GM12878 (cell line): ENCODE measurements at regions of chr6 and their contacts with region 1.

Region 1: DNA sequence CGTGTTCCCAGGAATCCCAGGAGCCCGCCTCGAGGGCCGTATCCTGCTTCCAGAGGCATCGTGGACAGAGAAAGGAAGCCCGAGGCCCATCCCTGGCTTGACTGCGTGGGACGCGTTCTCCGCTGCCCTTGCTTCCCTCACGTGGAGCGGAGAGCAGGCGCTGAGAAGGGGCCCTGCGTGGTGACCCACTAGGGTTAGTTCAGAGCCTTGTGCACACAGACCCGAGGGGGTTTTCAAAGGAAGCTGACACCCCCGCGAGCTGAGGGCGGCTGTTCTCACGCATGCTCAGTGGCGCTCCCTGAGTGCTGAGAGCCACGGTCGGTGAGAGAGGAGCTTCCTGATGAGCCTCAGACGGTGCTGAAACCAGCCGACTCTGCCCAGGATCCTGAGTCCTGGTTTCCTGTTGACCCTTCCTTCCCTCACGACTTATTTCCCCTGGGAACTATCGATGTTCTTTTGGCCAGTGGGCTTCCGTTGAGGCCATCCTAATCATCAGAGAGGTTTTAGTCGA is 28.9 kb upstream of the CCR6 start:
- DNase-seq: peak; percentile 90
- ATAC-seq: peak; percentile 66
- H3K4me3 ChIP-seq: peak overlapping the region; percentile 70
- H3K27ac ChIP-seq: peak overlapping the region; percentile 99
- H3K4me1 ChIP-seq: peaks cover 74% of the 10 kb centered on the region
- H3K27me3 ChIP-seq: no peaks in the 10 kb centered on the region
- CTCF ChIP-seq: no peak
- EP300 ChIP-seq: peak; percentile 39 to 66; a peak in 2 of 4 replicates
- POLR2A ChIP-seq: peak; percentile 88
- RAD21 ChIP-seq: no peak

Region 2: GRCh38 chr6:166333172-166333995 is 760.6 kb before region 1 on chr6:
- CTCF ChIA-PET with region 1: no interaction called
- POLR2A ChIA-PET with region 1: interaction called, 3 read pairs
- RAD21 ChIA-PET with region 1: no interaction called
- SMC1A ChIA-PET with region 1: no interaction called
- in situ Hi-C with region 1: no loop called
- intact Hi-C with region 1: loop called (anchors 10 kb)
- DNase-seq: peak; percentile 73
- ATAC-seq: peak; percentile 64
- H3K4me3 ChIP-seq: peak overlapping the region; percentile 34; the same call in 1 of the 2 replicates
- H3K27ac ChIP-seq: peak overlapping the region; percentile 93
- H3K4me1 ChIP-seq: peaks cover 43% of the 10 kb centered on the region
- H3K27me3 ChIP-seq: no peaks in the 10 kb centered on the region
- CTCF ChIP-seq: no peak
- EP300 ChIP-seq: peak; percentile 31 to 51; a peak in 2 of 4 replicates
- POLR2A ChIP-seq: peak; percentile 40; the same call in 1 of the 2 replicates
- RAD21 ChIP-seq: no peak

Region 3: GRCh38 chr6:166950443-166950821 is 143.5 kb before region 1 on chr6:
- CTCF ChIA-PET with region 1: no interaction called
- POLR2A ChIA-PET with region 1: interaction called, 9 read pairs
- RAD21 ChIA-PET with region 1: interaction called, 24 read pairs
- SMC1A ChIA-PET with region 1: interaction called, 10 read pairs
- in situ Hi-C with region 1: no loop called
- intact Hi-C with region 1: loop called (anchors 2 kb)
- DNase-seq: no peak
- ATAC-seq: peak; percentile 68
- H3K4me3 ChIP-seq: peak overlapping the region; percentile 71
- H3K27ac ChIP-seq: peak overlapping the region; percentile 96
- H3K4me1 ChIP-seq: peaks cover 42% of the 10 kb centered on the region
- H3K27me3 ChIP-seq: no peaks in the 10 kb centered on the region
- CTCF ChIP-seq: no peak
- EP300 ChIP-seq: no peak
- POLR2A ChIP-seq: peak; percentile 76
- RAD21 ChIP-seq: no peak

Region 4: GRCh38 chr6:166999145-166999883 is 94.7 kb before region 1 on chr6 and contains the start of gene CEP43:
- CTCF ChIA-PET with region 1: interaction called, 9 read pairs
- POLR2A ChIA-PET with region 1: interaction called, 52 read pairs
- RAD21 ChIA-PET with region 1: interaction called, 84 read pairs
- SMC1A ChIA-PET with region 1: interaction called, 97 read pairs
- in situ Hi-C with region 1: no loop called
- intact Hi-C with region 1: loop called (anchors 1 kb)
- DNase-seq: peak; percentile 71
- ATAC-seq: peak; percentile 92
- H3K4me3 ChIP-seq: peak within 1 kb of the TSS; percentile 91
- H3K27ac ChIP-seq: peak within 1 kb of the TSS; percentile 69
- H3K4me1 ChIP-seq: peaks cover 3% of the 10 kb centered on the region; the same call in 1 of the 2 replicates
- H3K27me3 ChIP-seq: no peaks in the 10 kb centered on the region
- CTCF ChIP-seq: no peak
- EP300 ChIP-seq: no peak
- POLR2A ChIP-seq: peak; percentile 73
- RAD21 ChIP-seq: no peak
- polyA plus RNA-seq, gene CEP43: 7.7 to 11.4 TPM

Region 5: GRCh38 chr6:167056370-167056769 is 37.6 kb before region 1 on chr6:
- CTCF ChIA-PET with region 1: no interaction called
- POLR2A ChIA-PET with region 1: interaction called, 8 read pairs
- RAD21 ChIA-PET with region 1: interaction called, 27 read pairs
- SMC1A ChIA-PET with region 1: interaction called, 18 read pairs
- in situ Hi-C with region 1: no loop called
- intact Hi-C with region 1: no loop called
- DNase-seq: peak; percentile 76
- ATAC-seq: peak; percentile 99
- H3K4me3 ChIP-seq: no peak overlapping the region
- H3K27ac ChIP-seq: no peak overlapping the region
- H3K4me1 ChIP-seq: peaks cover 9% of the 10 kb centered on the region; the same call in 1 of the 2 replicates
- H3K27me3 ChIP-seq: no peaks in the 10 kb centered on the region
- CTCF ChIP-seq: no peak
- EP300 ChIP-seq: peak in 1 of 2 experiments; percentile 75; a peak in 2 of 4 replicates
- POLR2A ChIP-seq: no peak
- RAD21 ChIP-seq: no peak

Region 6: DNA sequence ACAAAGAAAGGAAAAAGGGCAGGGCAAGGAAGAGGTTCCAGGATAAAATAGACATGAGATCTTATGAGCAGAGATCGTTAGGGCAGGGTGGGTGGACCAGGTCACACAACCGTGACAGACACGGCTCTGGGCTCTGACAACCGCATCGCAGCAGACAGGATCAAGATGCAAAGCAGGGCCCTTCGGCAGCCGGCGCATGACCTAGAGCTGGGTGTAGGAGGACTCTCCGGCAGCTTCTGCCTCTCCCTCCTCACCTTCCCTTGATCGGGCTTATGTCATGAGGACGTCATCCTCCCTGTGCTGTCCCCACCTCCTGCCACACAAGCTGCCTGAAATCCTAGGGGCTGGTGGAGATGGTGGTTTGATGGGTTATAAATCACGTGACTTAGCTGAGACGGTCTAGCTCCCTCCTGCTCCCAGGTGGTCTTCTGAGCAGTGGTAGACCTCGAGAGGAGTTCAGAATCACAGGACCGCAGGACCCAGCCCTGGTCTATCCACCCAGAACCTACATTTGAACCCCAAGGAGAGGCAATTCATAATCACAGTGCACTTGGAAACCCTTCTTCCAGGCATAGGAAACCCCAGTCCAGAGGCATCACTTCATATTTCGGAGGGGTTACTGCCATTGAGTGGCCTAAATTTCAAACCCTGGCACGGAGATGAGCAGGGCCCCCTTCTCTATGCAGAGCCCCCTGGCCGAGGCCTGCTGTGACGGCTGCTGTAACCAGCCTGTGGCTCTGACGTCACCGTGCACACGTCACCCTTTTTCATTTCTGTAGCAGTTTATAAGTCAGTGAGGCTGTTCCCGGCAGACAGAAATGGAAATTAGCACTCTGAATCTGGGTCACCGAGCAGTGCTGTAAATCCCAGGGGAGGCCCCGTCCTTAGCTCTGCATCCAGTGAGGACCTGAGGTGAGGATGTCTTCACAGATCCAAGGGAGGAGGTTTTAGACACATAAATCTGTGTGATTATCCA is 20.2 kb after region 1 on chr6:
- CTCF ChIA-PET with region 1: interaction called, 129 read pairs
- POLR2A ChIA-PET with region 1: interaction called, 279 read pairs
- RAD21 ChIA-PET with region 1: interaction called, 231 read pairs
- SMC1A ChIA-PET with region 1: interaction called, 542 read pairs
- in situ Hi-C with region 1: no loop called
- intact Hi-C with region 1: loop called (anchors 1 kb)
- DNase-seq: peak; percentile 93
- ATAC-seq: peak; percentile 90
- H3K4me3 ChIP-seq: peak overlapping the region; percentile 30; the same call in 1 of the 2 replicates
- H3K27ac ChIP-seq: peak overlapping the region; percentile 94
- H3K4me1 ChIP-seq: peaks cover 54% of the 10 kb centered on the region
- H3K27me3 ChIP-seq: no peaks in the 10 kb centered on the region
- CTCF ChIP-seq: no peak
- EP300 ChIP-seq: peak; percentile 83 to 91
- POLR2A ChIP-seq: peak; percentile 65
- RAD21 ChIP-seq: 0 out of 2 replicates have a peak, but pooled peaks have one; percentile 1

Region 7: DNA sequence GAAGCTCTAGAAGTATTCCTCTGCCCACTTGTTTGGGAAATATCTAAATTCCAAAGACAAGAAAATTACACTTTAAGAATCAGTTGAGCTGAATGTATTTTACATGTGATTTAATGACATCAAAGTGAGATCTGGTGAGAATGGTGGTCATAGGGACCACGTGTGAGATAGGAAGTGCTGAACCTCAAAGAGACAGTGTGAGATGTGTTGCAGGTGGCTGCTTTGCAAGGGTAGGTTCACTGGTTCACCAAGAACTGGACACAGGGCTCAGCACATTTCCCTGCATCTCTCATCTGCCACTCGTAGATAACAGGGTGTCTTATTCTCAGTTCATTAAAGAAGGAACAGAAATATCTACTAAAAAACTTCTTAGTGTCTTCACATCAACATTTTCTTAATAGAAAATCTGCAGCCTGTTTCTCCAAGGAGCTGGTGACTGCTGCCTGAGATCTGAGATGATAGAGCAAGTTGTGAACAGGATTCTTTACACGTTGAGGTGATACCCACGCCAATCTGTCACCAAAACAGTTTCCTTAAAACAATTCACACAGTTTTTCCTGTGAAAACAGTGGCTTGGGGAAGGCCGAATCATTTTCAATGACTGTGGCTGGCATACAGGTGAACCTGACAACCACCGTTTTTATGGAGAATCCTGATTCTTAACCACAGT is 36.2 kb after region 1 on chr6:
- CTCF ChIA-PET with region 1: interaction called, 129 read pairs
- POLR2A ChIA-PET with region 1: interaction called, 279 read pairs
- RAD21 ChIA-PET with region 1: interaction called, 231 read pairs
- SMC1A ChIA-PET with region 1: interaction called, 542 read pairs
- in situ Hi-C with region 1: no loop called
- intact Hi-C with region 1: loop called (anchors 2 kb)
- DNase-seq: no peak
- ATAC-seq: peak; percentile 71
- H3K4me3 ChIP-seq: peak overlapping the region; percentile 1; the same call in 1 of the 2 replicates
- H3K27ac ChIP-seq: peak overlapping the region; percentile 47
- H3K4me1 ChIP-seq: peaks cover 21% of the 10 kb centered on the region
- H3K27me3 ChIP-seq: no peaks in the 10 kb centered on the region
- CTCF ChIP-seq: no peak
- EP300 ChIP-seq: no peak
- POLR2A ChIP-seq: no peak
- RAD21 ChIP-seq: no peak